PC-9 (cell line): ENCODE measurements at regions of chr13 and their contacts with region 1.

Region 1: GRCh38 chr13:75294110-75294509 is 187.9 kb downstream of the TBC1D4 start:
- DNase-seq: no peak
- H3K4me3 ChIP-seq: no peak overlapping the region
- H3K27ac ChIP-seq: no peak overlapping the region
- H3K4me1 ChIP-seq: no peaks in the 10 kb centered on the region
- H3K27me3 ChIP-seq: no peaks in the 10 kb centered on the region
- CTCF ChIP-seq: no peak

Region 2: GRCh38 chr13:74523057-74523456 is 771.1 kb before region 1 on chr13:
- CTCF ChIA-PET with region 1: no interaction called
- POLR2A ChIA-PET with region 1: interaction called, 11 read pairs
- intact Hi-C with region 1: no loop called
- DNase-seq: no peak
- H3K4me3 ChIP-seq: no peak overlapping the region
- H3K27ac ChIP-seq: no peak overlapping the region
- H3K4me1 ChIP-seq: no peaks in the 10 kb centered on the region
- H3K27me3 ChIP-seq: no peaks in the 10 kb centered on the region
- CTCF ChIP-seq: no peak

Region 3: DNA sequence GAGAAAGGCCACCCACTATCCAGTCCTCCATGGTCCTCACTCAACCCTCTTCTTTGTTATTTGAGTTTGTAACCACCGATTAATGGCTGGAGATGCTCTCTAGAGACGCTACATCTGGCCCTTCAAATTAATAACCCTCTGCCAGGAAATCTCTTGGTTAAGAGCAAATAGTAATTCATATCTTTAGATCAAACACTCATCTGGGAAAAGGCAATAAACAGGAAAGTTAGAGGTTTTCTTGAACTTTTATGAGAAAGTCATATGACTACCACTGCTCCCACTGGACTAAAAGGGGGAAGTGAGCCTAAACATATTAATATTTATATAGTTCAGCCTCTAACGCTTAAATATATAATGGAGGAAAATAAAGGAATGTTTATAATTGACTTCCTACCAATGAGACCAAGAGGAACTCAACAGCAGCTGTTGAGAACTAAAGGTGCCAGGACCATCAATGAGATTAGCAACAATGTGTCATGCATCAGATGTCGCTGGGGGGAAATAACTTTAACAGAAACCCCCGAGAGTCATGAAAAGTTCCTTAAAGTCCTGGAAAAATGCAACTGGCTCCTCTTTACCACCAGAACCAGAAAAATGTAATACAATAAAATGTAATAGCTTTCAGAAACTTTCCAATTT is 185.1 kb after region 1 on chr13:
- CTCF ChIA-PET with region 1: no interaction called
- POLR2A ChIA-PET with region 1: no interaction called
- intact Hi-C with region 1: no loop called
- DNase-seq: no peak
- H3K4me3 ChIP-seq: peak overlapping the region; percentile 64; the same call in 1 of the 2 replicates
- H3K27ac ChIP-seq: no peak overlapping the region
- H3K4me1 ChIP-seq: peaks cover 23% of the 10 kb centered on the region
- H3K27me3 ChIP-seq: no peaks in the 10 kb centered on the region
- CTCF ChIP-seq: no peak